A549 (cell line): ENCODE measurements at regions of chr3 and their contacts with region 1.

Region 1: DNA sequence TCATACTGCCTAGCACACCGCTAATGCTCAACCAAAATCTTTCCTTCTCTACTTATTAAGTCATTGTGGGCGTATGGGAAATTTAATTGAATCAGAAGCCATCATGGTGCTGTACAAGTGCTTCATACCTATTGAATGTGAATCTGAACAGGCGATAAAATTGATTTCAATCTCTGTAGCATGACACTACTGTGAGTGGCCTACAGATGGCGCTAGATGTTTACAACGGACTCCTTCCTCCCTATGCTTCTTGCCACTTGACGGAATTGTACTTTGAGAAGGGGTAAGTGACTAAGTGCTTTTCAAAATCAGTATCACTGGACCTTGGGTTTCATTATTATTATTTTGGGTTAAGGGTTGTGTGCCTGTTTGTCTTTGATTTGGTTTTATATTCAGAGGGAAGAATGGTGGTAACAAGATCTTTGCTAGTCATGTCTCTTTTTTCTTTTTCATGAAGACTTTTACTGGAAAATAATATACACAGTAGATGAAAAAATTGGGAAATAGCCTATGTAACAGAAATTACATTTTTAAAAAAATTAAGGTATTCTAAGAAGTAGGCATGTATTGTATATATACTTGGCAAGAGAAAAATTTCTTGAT is 35.4 kb downstream of the ACP3 start:
- DNase-seq: peak; percentile 38 to 61
- ATAC-seq: peak; percentile 43 to 82; a peak in 3 of 6 replicates
- H3K4me3 ChIP-seq: no peak overlapping the region
- H3K27ac ChIP-seq: no peak overlapping the region
- H3K4me1 ChIP-seq: no peaks in the 10 kb centered on the region
- CTCF ChIP-seq: peak; percentile 73
- EP300 ChIP-seq: no peak
- POLR2A ChIP-seq: no peak
- RAD21 ChIP-seq: peak; percentile 70 to 74

Region 2: DNA sequence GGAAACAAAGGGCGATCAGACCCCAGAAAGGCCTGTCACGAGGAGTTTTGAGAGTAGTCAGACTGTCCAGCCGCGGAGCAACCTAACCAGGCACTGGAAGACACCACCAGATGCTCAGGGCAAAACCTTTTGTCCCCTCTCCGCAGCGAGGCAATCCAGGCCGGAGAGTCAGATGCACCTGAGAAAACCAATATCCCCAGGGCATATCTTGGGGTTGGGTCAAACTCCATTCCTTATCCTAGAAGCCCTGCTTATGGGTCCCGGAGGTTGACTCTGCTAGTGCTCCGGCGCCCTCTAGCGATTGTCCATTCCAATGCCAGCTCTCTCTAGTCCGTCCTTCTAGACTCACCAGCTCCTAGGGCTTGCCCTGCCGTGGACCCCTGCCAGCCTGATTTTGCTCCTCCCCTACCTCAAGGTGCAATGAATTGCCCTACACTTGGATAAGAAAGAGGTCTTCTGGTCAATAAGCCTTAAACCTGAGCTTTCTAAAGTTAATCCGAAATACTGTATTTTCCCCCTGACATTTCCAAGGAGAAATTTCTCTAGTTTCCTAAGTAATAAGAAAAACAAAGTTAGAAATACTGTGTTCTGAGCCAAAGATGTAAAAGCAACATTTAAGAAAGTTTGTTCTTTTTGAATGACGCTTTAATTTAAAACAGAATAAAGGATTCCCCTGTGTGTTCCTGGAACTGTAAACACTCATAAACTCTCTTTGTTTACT is 323.3 kb before region 1 on chr3:
- CTCF ChIA-PET with region 1: no interaction called
- POLR2A ChIA-PET with region 1: no interaction called
- DNase-seq: peak; percentile 66 to 82
- ATAC-seq: peak; percentile 96 to 100
- H3K4me3 ChIP-seq: no peak overlapping the region
- H3K27ac ChIP-seq: 0 out of 6 replicates have a peak overlapping the region, but pooled peaks of 1 of the 2 experiments have one; percentile 22
- H3K4me1 ChIP-seq: peaks cover 29% of the 10 kb centered on the region
- CTCF ChIP-seq: peak; percentile 84
- EP300 ChIP-seq: no peak
- POLR2A ChIP-seq: no peak
- RAD21 ChIP-seq: peak; percentile 88 to 93

Region 3: GRCh38 chr3:132368962-132369361 is 16.3 kb after region 1 on chr3:
- CTCF ChIA-PET with region 1: interaction called, 11 read pairs
- POLR2A ChIA-PET with region 1: no interaction called
- DNase-seq: no peak
- ATAC-seq: no peak; a peak in 1 of 6 replicates
- H3K4me3 ChIP-seq: no peak overlapping the region
- H3K27ac ChIP-seq: no peak overlapping the region
- H3K4me1 ChIP-seq: no peaks in the 10 kb centered on the region
- CTCF ChIP-seq: no peak
- EP300 ChIP-seq: no peak
- POLR2A ChIP-seq: no peak
- RAD21 ChIP-seq: no peak